H1 (cell line): ENCODE measurements at regions of chr15 and their contacts with region 1.

Region 1: GRCh38 chr15:89647191-89647851 is 7.9 kb downstream of the KIF7 start:
- DNase-seq: peak; percentile 39 to 99
- H3K4me3 ChIP-seq: peak overlapping the region in 1 of 4 experiments; percentile 17; a peak in 1 of 8 replicates
- H3K27ac ChIP-seq: no peak overlapping the region
- H3K4me1 ChIP-seq: no peaks in the 10 kb centered on the region
- H3K27me3 ChIP-seq: no peaks in the 10 kb centered on the region
- CTCF ChIP-seq: peak; percentile 85 to 98 (median 98)
- EP300 ChIP-seq: no peak
- POLR2A ChIP-seq: no peak
- RAD21 ChIP-seq: peak; percentile 58 to 64

Region 2: GRCh38 chr15:89625716-89626115 is 21.6 kb before region 1 on chr15:
- CTCF ChIA-PET with region 1: interaction called, 18 read pairs
- POLR2A ChIA-PET with region 1: interaction called, 4 read pairs
- DNase-seq: no peak
- H3K4me3 ChIP-seq: no peak overlapping the region
- H3K27ac ChIP-seq: no peak overlapping the region
- H3K4me1 ChIP-seq: no peaks in the 10 kb centered on the region
- H3K27me3 ChIP-seq: no peaks in the 10 kb centered on the region
- CTCF ChIP-seq: no peak
- EP300 ChIP-seq: no peak
- POLR2A ChIP-seq: no peak
- RAD21 ChIP-seq: no peak

Region 3: GRCh38 chr15:89665449-89666181 is 18.3 kb after region 1 on chr15:
- CTCF ChIA-PET with region 1: interaction called, 43 read pairs
- POLR2A ChIA-PET with region 1: interaction called, 4 read pairs
- DNase-seq: peak in 1 of 2 experiments; percentile 79
- H3K4me3 ChIP-seq: peak overlapping the region; percentile 21 to 61 (median 52)
- H3K27ac ChIP-seq: no peak overlapping the region
- H3K4me1 ChIP-seq: peaks cover 0 to 11% (median 7%) of the 10 kb centered on the region in 4 experiments; a peak in 6 of 7 replicates
- H3K27me3 ChIP-seq: peaks cover 0 to 20% (median 12%) of the 10 kb centered on the region in 4 experiments; a peak in 5 of 7 replicates
- CTCF ChIP-seq: no peak
- EP300 ChIP-seq: no peak
- POLR2A ChIP-seq: no peak
- RAD21 ChIP-seq: no peak

Region 4: GRCh38 chr15:89851673-89852341 is 204.5 kb after region 1 on chr15:
- CTCF ChIA-PET with region 1: no interaction called
- POLR2A ChIA-PET with region 1: no interaction called
- DNase-seq: no peak
- H3K4me3 ChIP-seq: no peak overlapping the region
- H3K27ac ChIP-seq: no peak overlapping the region
- H3K4me1 ChIP-seq: no peaks in the 10 kb centered on the region
- H3K27me3 ChIP-seq: no peaks in the 10 kb centered on the region
- CTCF ChIP-seq: no peak
- EP300 ChIP-seq: no peak
- POLR2A ChIP-seq: no peak
- RAD21 ChIP-seq: no peak